ENCODE measurements at regions of chr3 and their contacts with region 1.

Region 1: GRCh38 chr3:47193871-47194859 is 30.3 kb upstream of the SETD2 start:
- DNase-seq: no peak
- H3K4me3 ChIP-seq: no peak overlapping the region
- H3K27ac ChIP-seq: no peak overlapping the region
- H3K4me1 ChIP-seq: no peaks in the 10 kb centered on the region
- H3K27me3 ChIP-seq: no peaks in the 10 kb centered on the region
- CTCF ChIP-seq: no peak
- POLR2A ChIP-seq: no peak

Region 2: GRCh38 chr3:47210863-47211405 is 16.8 kb after region 1 on chr3:
- CTCF ChIA-PET with region 1: no interaction called
- POLR2A ChIA-PET with region 1: interaction called, 8 read pairs
- dilution Hi-C with region 1: no loop called
- intact Hi-C with region 1: loop called (anchors 1 kb)
- DNase-seq: no peak
- H3K4me3 ChIP-seq: no peak overlapping the region
- H3K27ac ChIP-seq: no peak overlapping the region
- H3K4me1 ChIP-seq: no peaks in the 10 kb centered on the region
- H3K27me3 ChIP-seq: no peaks in the 10 kb centered on the region
- CTCF ChIP-seq: no peak
- POLR2A ChIP-seq: no peak